WTC11 (cell line): ENCODE measurements at regions of chr16 and their contacts with region 1.

Region 1: GRCh38 chr16:13919683-13920509 is at the start of gene ERCC4:
- DNase-seq: peak; percentile 100
- ATAC-seq: peak; percentile 99
- H3K4me3 Mint-ChIP-seq: peak within 1 kb of the TSS; percentile 98
- H3K27ac Mint-ChIP-seq: peak within 1 kb of the TSS; percentile 76
- H3K4me1 Mint-ChIP-seq: peaks cover 17% of the 10 kb centered on the region
- H3K27me3 Mint-ChIP-seq: no peaks in the 10 kb centered on the region; the same call in 1 of the 2 replicates
- CTCF ChIP-seq: peak; percentile 85
- total RNA-seq, gene ERCC4: 12.1 to 15.7 TPM (median 13.4 TPM) in 3 replicates

Region 2: GRCh38 chr16:13823501-13823900 is 96.4 kb before region 1 on chr16:
- CTCF ChIA-PET with region 1: no interaction called
- POLR2A ChIA-PET with region 1: no interaction called
- DNase-seq: no peak
- ATAC-seq: no peak
- H3K4me3 Mint-ChIP-seq: no peak overlapping the region
- H3K27ac Mint-ChIP-seq: no peak overlapping the region
- H3K4me1 Mint-ChIP-seq: no peaks in the 10 kb centered on the region
- H3K27me3 Mint-ChIP-seq: 0 out of 2 replicates have a peak, but pooled peaks cover 3% of the 10 kb centered on the region
- CTCF ChIP-seq: no peak

Region 3: GRCh38 chr16:13866073-13866472 is 53.8 kb before region 1 on chr16:
- CTCF ChIA-PET with region 1: interaction called, 16 read pairs
- POLR2A ChIA-PET with region 1: no interaction called
- DNase-seq: peak; percentile 85
- ATAC-seq: peak; percentile 100
- H3K4me3 Mint-ChIP-seq: no peak overlapping the region
- H3K27ac Mint-ChIP-seq: no peak overlapping the region
- H3K4me1 Mint-ChIP-seq: no peaks in the 10 kb centered on the region
- H3K27me3 Mint-ChIP-seq: peaks cover 2% of the 10 kb centered on the region; the same call in 1 of the 2 replicates
- CTCF ChIP-seq: peak; percentile 56; the same call in 1 of the 2 replicates

Region 4: DNA sequence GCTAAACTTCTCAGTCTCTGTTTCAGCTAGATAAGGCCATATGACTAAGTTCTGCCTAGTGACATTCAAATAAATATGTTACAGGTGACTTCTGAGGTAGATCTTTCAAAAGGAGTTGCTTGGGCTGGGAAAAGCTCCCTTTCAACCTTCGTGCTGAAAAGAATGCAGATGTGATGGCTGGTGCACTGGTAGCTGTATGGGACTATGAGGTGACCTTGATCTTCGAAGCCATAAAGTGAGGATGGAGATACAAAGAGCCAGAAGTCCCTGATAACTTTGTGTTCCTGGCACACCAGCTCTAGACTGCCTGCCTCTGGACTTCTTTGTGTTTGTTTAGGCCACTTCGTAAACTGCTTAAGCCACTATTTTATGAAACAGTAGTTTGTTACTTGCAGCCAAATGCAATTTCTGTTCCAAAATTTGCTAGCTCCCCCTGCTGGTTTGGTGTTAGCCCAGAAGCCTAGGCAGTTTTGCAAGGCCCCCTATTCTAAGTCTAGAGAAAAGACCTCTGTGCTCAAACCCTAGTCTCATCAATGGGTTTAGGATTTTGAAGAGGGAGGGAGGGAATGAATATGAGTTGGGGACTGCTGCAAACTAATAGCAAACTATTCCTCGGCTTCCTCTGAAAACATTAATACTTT is 23.2 kb before region 1 on chr16:
- CTCF ChIA-PET with region 1: interaction called, 19 read pairs
- POLR2A ChIA-PET with region 1: no interaction called
- DNase-seq: no peak
- ATAC-seq: no peak
- H3K4me3 Mint-ChIP-seq: no peak overlapping the region
- H3K27ac Mint-ChIP-seq: no peak overlapping the region
- H3K4me1 Mint-ChIP-seq: no peaks in the 10 kb centered on the region
- H3K27me3 Mint-ChIP-seq: no peaks in the 10 kb centered on the region; the same call in 1 of the 2 replicates
- CTCF ChIP-seq: no peak

Region 5: DNA sequence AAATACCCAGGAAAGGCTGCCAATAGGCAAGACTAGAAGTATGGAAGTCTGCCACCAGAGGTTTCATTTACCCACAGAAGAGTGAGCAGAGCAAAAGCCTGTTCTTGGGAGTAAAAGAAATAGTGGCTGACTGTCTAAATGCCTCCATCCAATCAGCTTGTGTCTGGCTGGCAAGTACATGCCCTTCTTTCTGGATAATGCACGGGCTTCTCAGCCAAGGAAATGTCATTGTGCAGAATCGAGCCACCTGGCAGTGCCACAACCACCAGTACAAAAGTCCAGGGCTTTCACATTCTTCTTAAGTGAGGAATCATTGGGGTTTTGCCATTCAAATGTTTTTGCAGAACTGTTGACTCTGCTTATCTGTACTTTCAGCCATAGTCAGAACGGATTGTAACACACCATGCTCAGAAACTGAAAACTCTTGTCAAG is 10.0 kb before region 1 on chr16:
- CTCF ChIA-PET with region 1: interaction called, 24 read pairs
- POLR2A ChIA-PET with region 1: no interaction called
- DNase-seq: no peak
- ATAC-seq: no peak
- H3K4me3 Mint-ChIP-seq: no peak overlapping the region
- H3K27ac Mint-ChIP-seq: no peak overlapping the region
- H3K4me1 Mint-ChIP-seq: no peaks in the 10 kb centered on the region; the same call in 1 of the 2 replicates
- H3K27me3 Mint-ChIP-seq: peaks cover 20% of the 10 kb centered on the region
- CTCF ChIP-seq: no peak

Region 6: GRCh38 chr16:14018848-14019247 is 99.0 kb after region 1 on chr16:
- CTCF ChIA-PET with region 1: interaction called, 16 read pairs
- POLR2A ChIA-PET with region 1: no interaction called
- DNase-seq: no peak
- ATAC-seq: peak; percentile 59
- H3K4me3 Mint-ChIP-seq: no peak overlapping the region
- H3K27ac Mint-ChIP-seq: no peak overlapping the region; the same call in 1 of the 2 replicates
- H3K4me1 Mint-ChIP-seq: peaks cover 13% of the 10 kb centered on the region
- H3K27me3 Mint-ChIP-seq: no peaks in the 10 kb centered on the region
- CTCF ChIP-seq: no peak

Region 7: DNA sequence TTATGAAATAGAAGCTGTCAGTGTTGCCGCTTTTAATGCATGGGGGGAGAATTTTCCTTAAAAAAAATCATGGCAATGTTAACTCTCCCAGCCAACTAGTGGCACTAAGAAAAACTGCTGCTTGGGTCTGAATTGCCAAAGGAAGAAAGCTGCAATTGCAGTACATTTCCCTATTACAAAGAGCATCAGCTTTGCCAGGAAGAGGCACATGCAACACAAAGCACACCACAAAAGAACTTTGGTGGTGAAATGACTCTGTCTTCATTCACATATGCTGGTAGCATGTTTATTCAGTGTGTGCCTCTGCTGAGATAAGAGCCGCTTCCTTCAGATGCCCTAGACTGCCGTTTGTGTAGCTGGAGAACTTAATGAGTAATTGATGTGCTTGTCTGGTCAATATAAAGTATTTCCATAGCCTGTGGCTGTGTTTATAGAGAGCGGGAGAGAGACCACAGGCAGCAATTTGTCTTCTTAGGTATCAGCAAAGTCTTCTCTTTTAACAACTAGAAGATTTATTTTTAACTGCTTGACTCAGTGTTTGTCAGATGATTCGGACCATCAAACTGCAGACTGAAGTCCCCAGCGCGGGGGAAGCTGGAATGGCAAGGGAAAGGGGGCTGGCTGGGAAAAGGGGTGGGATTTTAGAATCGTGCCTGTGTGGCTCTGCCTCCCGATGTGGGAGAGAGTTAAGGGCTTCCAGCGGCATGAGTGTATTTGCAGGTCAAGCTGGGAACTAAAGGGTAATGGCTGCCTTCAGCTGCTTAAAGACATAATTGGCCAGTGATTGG is 266.3 kb after region 1 on chr16:
- CTCF ChIA-PET with region 1: interaction called, 28 read pairs
- POLR2A ChIA-PET with region 1: no interaction called
- DNase-seq: peak; percentile 46
- ATAC-seq: peak; percentile 92
- H3K4me3 Mint-ChIP-seq: peak overlapping the region; percentile 40
- H3K27ac Mint-ChIP-seq: peak overlapping the region; percentile 57
- H3K4me1 Mint-ChIP-seq: peaks cover 33% of the 10 kb centered on the region
- H3K27me3 Mint-ChIP-seq: no peaks in the 10 kb centered on the region
- CTCF ChIP-seq: 0 out of 2 replicates have a peak, but pooled peaks have one; percentile 16

Region 8: DNA sequence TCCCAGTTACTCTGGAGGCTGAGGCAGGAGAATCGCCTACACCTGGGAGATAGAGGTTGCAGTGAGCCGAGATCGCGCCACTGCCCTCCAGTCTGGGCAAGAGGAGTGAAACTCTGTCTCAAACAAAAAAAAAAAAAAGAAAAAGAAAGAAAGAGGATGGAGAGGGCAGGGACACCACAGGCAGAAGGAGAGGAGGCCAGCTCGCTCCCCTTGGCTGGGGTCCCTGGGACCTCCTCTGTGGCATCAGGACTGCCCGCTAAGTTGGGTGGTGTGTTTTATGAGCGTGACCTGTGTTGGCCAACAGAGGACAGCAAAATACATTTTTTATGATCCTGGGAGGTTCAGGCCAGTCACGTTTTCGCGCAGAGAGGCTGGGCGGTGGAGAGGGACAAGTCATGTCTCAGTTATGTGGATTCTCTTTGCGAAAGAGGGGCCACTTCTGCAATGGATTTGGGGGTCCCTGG is 380.8 kb after region 1 on chr16:
- CTCF ChIA-PET with region 1: interaction called, 14 read pairs
- POLR2A ChIA-PET with region 1: no interaction called
- DNase-seq: peak; percentile 59
- ATAC-seq: peak; percentile 36
- H3K4me3 Mint-ChIP-seq: peak overlapping the region; percentile 79
- H3K27ac Mint-ChIP-seq: peak overlapping the region; percentile 71; the same call in 1 of the 2 replicates
- H3K4me1 Mint-ChIP-seq: peaks cover 30% of the 10 kb centered on the region
- H3K27me3 Mint-ChIP-seq: peaks cover 8% of the 10 kb centered on the region; the same call in 1 of the 2 replicates
- CTCF ChIP-seq: no peak